ENCODE measurements at regions of chr6 and their contacts with region 1.

Region 1: GRCh38 chr6:107847844-107848802 is 24.0 kb upstream of the SCML4 start:
- DNase-seq: peak; percentile 68 to 97
- H3K4me3 ChIP-seq: no peak overlapping the region
- CTCF ChIP-seq: peak in 1 of 3 donors; percentile 72
- POLR2A ChIP-seq: no peak

Region 2: GRCh38 chr6:107674995-107675738 is 173.0 kb before region 1 on chr6:
- intact Hi-C with region 1: loop called (anchors 10 kb)
- DNase-seq: peak; percentile 51 to 94
- H3K4me3 ChIP-seq: no peak overlapping the region
- CTCF ChIP-seq: peak in 1 of 3 donors; percentile 71
- POLR2A ChIP-seq: no peak